Caco-2 (cell line): ENCODE measurements at regions of chr6 and their contacts with region 1.

Region 1: GRCh38 chr6:33988121-33989015 is 157.5 kb downstream of the GRM4 start:
- DNase-seq: peak; percentile 86 to 88
- H3K4me3 ChIP-seq: peak overlapping the region; percentile 13
- H3K4me3 Mint-ChIP-seq: peak overlapping the region; percentile 59
- H3K27ac Mint-ChIP-seq: no peak overlapping the region
- H3K4me1 ChIP-seq: peaks cover 17% of the 10 kb centered on the region
- H3K4me1 Mint-ChIP-seq: peaks cover 17% of the 10 kb centered on the region
- H3K27me3 ChIP-seq: no peaks in the 10 kb centered on the region; the same call in 1 of the 2 replicates
- H3K27me3 Mint-ChIP-seq: peaks cover 2% of the 10 kb centered on the region
- CTCF ChIP-seq: peak in 1 of 2 experiments; percentile 33

Region 2: GRCh38 chr6:33967966-33968724 is 20.2 kb before region 1 on chr6:
- CTCF ChIA-PET with region 1: no interaction called
- POLR2A ChIA-PET with region 1: no interaction called
- intact Hi-C with region 1: loop called (anchors 2 kb)
- DNase-seq: peak; percentile 44 to 58
- H3K4me3 ChIP-seq: no peak overlapping the region
- H3K4me3 Mint-ChIP-seq: no peak overlapping the region
- H3K27ac Mint-ChIP-seq: no peak overlapping the region
- H3K4me1 ChIP-seq: no peaks in the 10 kb centered on the region
- H3K4me1 Mint-ChIP-seq: peaks cover 11% of the 10 kb centered on the region
- H3K27me3 ChIP-seq: no peaks in the 10 kb centered on the region; the same call in 1 of the 2 replicates
- H3K27me3 Mint-ChIP-seq: peaks cover 17% of the 10 kb centered on the region
- CTCF ChIP-seq: peak; percentile 59 to 86